HCT116 (cell line): ENCODE measurements at regions of chr6 and their contacts with region 1.

Region 1: GRCh38 chr6:63764318-63764916 is 128.8 kb downstream of the PHF3 start:
- DNase-seq: peak; percentile 29
- ATAC-seq: peak; percentile 53; the same call in 1 of the 2 replicates
- H3K4me3 ChIP-seq: no peak overlapping the region
- H3K27ac ChIP-seq: no peak overlapping the region
- H3K4me1 ChIP-seq: no peaks in the 10 kb centered on the region
- H3K27me3 ChIP-seq: no peaks in the 10 kb centered on the region
- CTCF ChIP-seq: peak; percentile 15 to 51 (median 44); a peak in 2 of 6 replicates
- POLR2A ChIP-seq: no peak
- RAD21 ChIP-seq: peak; percentile 61

Region 2: GRCh38 chr6:63307581-63308246 is 456.7 kb before region 1 on chr6:
- CTCF ChIA-PET with region 1: interaction called, 5 read pairs
- POLR2A ChIA-PET with region 1: no interaction called
- RAD21 ChIA-PET with region 1: no interaction called
- intact Hi-C with region 1: loop called (anchors 5 kb)
- DNase-seq: peak; percentile 47
- ATAC-seq: peak; percentile 98
- H3K4me3 ChIP-seq: no peak overlapping the region
- H3K27ac ChIP-seq: no peak overlapping the region
- H3K4me1 ChIP-seq: no peaks in the 10 kb centered on the region
- H3K27me3 ChIP-seq: no peaks in the 10 kb centered on the region
- CTCF ChIP-seq: peak; percentile 29 to 66 (median 56); a peak in 5 of 6 replicates
- POLR2A ChIP-seq: no peak
- RAD21 ChIP-seq: peak; percentile 68

Region 3: GRCh38 chr6:63352587-63353285 is 411.7 kb before region 1 on chr6:
- CTCF ChIA-PET with region 1: interaction called, 76 read pairs
- POLR2A ChIA-PET with region 1: interaction called, 4 read pairs
- RAD21 ChIA-PET with region 1: interaction called, 3 to 8 read pairs
- intact Hi-C with region 1: loop called (anchors 1 kb)
- DNase-seq: peak; percentile 36
- ATAC-seq: peak; percentile 75
- H3K4me3 ChIP-seq: no peak overlapping the region
- H3K27ac ChIP-seq: no peak overlapping the region
- H3K4me1 ChIP-seq: peaks cover 0 to 31% of the 10 kb centered on the region in 2 experiments; a peak in 2 of 4 replicates
- H3K27me3 ChIP-seq: no peaks in the 10 kb centered on the region
- CTCF ChIP-seq: peak; percentile 59 to 82 (median 73)
- POLR2A ChIP-seq: no peak
- RAD21 ChIP-seq: peak; percentile 94

Region 4: DNA sequence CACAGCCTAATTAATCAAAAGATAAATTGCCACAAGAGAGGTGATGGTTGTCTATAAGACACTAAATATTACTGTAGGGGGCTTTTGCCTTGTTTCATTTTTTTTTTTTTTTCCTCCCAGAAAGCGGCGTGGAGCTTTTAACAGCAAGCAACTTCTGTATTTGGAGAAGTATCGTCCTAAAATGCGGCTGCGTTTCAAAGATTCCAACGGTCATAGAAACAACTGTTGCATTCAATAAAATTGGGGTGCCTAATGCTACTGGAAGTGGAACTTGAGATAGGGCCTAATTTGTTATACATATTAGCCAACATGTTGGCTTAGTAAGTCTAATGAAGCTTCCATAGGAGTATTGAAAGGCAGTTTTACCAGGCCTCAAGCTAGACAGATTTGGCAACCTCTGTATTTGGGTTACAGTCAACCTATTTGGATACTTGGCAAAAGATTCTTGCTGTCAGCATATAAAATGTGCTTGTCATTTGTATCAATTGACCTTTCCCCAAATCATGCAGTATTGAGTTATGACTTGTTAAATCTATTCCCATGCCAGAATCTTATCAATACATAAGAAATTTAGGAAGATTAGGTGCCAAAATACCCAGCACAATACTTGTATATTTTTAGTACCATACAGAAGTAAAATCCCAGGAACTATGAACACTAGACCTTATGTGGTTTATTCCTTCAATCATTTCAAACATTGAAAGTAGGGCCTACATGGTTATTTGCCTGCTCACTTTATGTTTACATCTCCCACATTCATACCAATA is 184.3 kb before region 1 on chr6:
- CTCF ChIA-PET with region 1: no interaction called
- POLR2A ChIA-PET with region 1: no interaction called
- RAD21 ChIA-PET with region 1: interaction called in 1 of 2 experiments, 4 read pairs
- intact Hi-C with region 1: loop called (anchors 5 kb)
- DNase-seq: no peak
- ATAC-seq: no peak
- H3K4me3 ChIP-seq: no peak overlapping the region
- H3K27ac ChIP-seq: no peak overlapping the region
- H3K4me1 ChIP-seq: peaks cover 0 to 1% of the 10 kb centered on the region in 2 experiments; a peak in 2 of 4 replicates
- H3K27me3 ChIP-seq: no peaks in the 10 kb centered on the region
- CTCF ChIP-seq: no peak
- POLR2A ChIP-seq: no peak
- RAD21 ChIP-seq: no peak

Region 5: GRCh38 chr6:63598049-63599036 is 166.1 kb before region 1 on chr6:
- CTCF ChIA-PET with region 1: interaction called, 35 read pairs
- POLR2A ChIA-PET with region 1: no interaction called
- RAD21 ChIA-PET with region 1: interaction called in 1 of 2 experiments, 4 read pairs
- intact Hi-C with region 1: loop called (anchors 2 kb)
- DNase-seq: peak; percentile 51
- ATAC-seq: peak; percentile 99
- H3K4me3 ChIP-seq: no peak overlapping the region
- H3K27ac ChIP-seq: no peak overlapping the region
- H3K4me1 ChIP-seq: peaks cover 0 to 4% of the 10 kb centered on the region in 2 experiments; a peak in 1 of 4 replicates
- H3K27me3 ChIP-seq: no peaks in the 10 kb centered on the region
- CTCF ChIP-seq: peak; percentile 35 to 80 (median 78); a peak in 5 of 6 replicates
- POLR2A ChIP-seq: no peak
- RAD21 ChIP-seq: peak; percentile 63

Region 6: GRCh38 chr6:63859528-63859927 is 95.1 kb after region 1 on chr6:
- CTCF ChIA-PET with region 1: no interaction called
- POLR2A ChIA-PET with region 1: no interaction called
- RAD21 ChIA-PET with region 1: no interaction called
- intact Hi-C with region 1: no loop called
- DNase-seq: no peak
- ATAC-seq: no peak
- H3K4me3 ChIP-seq: no peak overlapping the region
- H3K27ac ChIP-seq: no peak overlapping the region
- H3K4me1 ChIP-seq: no peaks in the 10 kb centered on the region
- H3K27me3 ChIP-seq: no peaks in the 10 kb centered on the region
- CTCF ChIP-seq: no peak
- POLR2A ChIP-seq: no peak
- RAD21 ChIP-seq: no peak